ENCODE measurements at regions of chr20 and their contacts with region 1.

Region 1: DNA sequence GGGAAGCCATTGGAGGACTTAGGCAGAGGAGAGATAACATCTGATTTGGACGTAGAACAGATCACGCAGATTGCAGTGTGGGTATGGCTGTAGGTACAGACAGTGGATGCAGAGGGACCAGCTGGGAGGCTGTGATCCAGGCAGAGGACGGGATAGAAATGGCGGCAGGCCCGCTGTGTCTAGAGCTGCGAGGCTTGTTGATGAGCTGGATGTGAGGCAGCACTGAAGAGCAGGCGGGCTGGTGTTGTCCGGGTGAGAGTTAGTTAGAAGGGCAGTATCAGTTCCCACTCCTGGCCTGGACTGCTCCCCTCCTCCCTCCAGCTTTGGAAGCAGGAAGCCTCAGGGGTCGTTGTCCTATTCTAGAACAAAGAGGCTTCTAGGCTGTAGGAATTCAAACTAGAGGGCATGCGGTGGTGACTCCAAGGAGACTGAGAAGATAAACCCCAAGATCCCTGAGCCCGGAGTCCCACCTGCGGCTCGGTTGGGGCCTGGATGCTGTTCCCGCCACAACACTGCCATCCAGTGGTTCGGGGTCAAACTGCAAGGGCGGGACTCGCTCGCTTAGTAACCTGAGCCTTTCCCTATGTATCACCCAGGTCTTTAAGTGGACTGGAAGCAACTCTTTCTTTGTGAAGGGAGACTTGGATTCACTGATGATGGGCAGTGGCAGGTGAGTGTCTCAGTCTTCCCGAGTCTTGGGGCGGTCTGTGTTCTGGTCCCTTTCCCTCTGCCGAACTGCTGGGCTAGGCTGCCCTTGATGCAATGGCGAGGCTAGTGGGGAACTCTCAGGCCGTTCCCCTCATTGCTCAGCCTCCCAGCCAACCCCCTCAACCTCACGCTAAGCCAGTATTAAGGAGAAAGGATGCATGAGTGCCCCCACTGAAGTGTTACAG is 11.2 kb downstream of the TLDC2 start:
- DNase-seq: peak; percentile 94
- ATAC-seq: peak; percentile 96
- H3K4me3 ChIP-seq: peak overlapping the region; percentile 29; the same call in 1 of the 2 replicates
- H3K27ac ChIP-seq: no peak overlapping the region
- H3K4me1 ChIP-seq: peaks cover 4% of the 10 kb centered on the region; the same call in 1 of the 2 replicates
- H3K27me3 ChIP-seq: no peaks in the 10 kb centered on the region
- CTCF ChIP-seq: peak; percentile 94

Region 2: DNA sequence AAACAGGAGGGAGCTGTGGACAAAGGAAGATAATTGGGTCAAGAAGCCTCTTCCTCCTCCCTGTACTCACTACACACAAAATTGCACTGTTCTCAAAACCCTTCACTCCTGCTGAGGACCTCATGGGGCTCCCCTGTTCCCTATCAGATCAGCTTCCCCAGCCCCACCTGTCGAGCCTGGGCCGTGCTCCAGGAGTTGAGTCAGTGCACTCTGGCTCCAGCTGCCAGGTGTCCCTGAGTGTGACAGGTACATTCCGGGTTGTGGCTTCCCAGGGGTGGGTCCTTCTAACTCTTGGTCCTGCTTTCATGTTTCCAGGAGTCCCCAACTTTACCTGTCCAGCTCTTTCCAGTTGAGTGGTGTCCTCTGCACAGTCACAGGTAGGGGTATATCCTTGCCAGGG is 273.1 kb before region 1 on chr20:
- CTCF ChIA-PET with region 1: interaction called, 11 read pairs
- POLR2A ChIA-PET with region 1: no interaction called
- intact Hi-C with region 1: no loop called
- DNase-seq: peak; percentile 71
- ATAC-seq: peak; percentile 77
- H3K4me3 ChIP-seq: no peak overlapping the region
- H3K27ac ChIP-seq: no peak overlapping the region
- H3K4me1 ChIP-seq: peaks cover 12% of the 10 kb centered on the region; the same call in 1 of the 2 replicates
- H3K27me3 ChIP-seq: no peaks in the 10 kb centered on the region
- CTCF ChIP-seq: no peak

Region 3: DNA sequence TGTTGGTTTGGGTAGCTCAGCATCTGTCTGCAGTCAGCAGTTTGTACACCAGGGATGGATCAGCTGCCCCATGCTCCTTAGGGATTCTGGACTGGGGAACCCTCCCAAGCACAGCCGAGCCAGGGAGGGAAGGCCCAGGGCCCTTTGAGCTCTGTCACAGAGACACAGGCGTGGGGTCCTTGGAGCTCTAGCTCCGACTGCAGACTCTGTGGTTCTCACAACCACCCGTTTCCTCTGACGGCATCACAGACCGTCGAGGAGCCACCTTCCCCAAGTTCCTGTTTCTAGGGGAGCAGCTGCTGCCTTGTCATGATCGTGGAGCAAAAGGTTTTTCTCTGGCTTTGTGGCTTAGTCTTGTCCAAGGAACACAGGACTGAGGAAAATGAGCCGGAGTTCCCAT is 241.1 kb before region 1 on chr20 and contains the start of gene SLA2:
- CTCF ChIA-PET with region 1: interaction called, 10 read pairs
- POLR2A ChIA-PET with region 1: no interaction called
- intact Hi-C with region 1: no loop called
- DNase-seq: no peak
- ATAC-seq: no peak
- H3K4me3 ChIP-seq: no peak within 1 kb of the TSS
- H3K27ac ChIP-seq: no peak within 1 kb of the TSS
- H3K4me1 ChIP-seq: peaks cover 12% of the 10 kb centered on the region
- H3K27me3 ChIP-seq: no peaks in the 10 kb centered on the region
- CTCF ChIP-seq: no peak
- total RNA-seq, gene SLA2: 0.23 and 0.51 TPM in 2 replicates

Region 4: GRCh38 chr20:36773597-36774390 is 113.3 kb before region 1 on chr20 and contains the start of gene DSN1:
- CTCF ChIA-PET with region 1: no interaction called
- POLR2A ChIA-PET with region 1: no interaction called
- intact Hi-C with region 1: loop called (anchors 1 kb)
- DNase-seq: peak; percentile 99
- ATAC-seq: peak; percentile 83
- H3K4me3 ChIP-seq: peak within 1 kb of the TSS; percentile 82
- H3K27ac ChIP-seq: peak within 1 kb of the TSS; percentile 83
- H3K4me1 ChIP-seq: peaks cover 18% of the 10 kb centered on the region
- H3K27me3 ChIP-seq: no peaks in the 10 kb centered on the region
- CTCF ChIP-seq: peak; percentile 89; the same call in 1 of the 2 replicates
- total RNA-seq, gene DSN1: 36.3 and 39.8 TPM in 2 replicates

Region 5: DNA sequence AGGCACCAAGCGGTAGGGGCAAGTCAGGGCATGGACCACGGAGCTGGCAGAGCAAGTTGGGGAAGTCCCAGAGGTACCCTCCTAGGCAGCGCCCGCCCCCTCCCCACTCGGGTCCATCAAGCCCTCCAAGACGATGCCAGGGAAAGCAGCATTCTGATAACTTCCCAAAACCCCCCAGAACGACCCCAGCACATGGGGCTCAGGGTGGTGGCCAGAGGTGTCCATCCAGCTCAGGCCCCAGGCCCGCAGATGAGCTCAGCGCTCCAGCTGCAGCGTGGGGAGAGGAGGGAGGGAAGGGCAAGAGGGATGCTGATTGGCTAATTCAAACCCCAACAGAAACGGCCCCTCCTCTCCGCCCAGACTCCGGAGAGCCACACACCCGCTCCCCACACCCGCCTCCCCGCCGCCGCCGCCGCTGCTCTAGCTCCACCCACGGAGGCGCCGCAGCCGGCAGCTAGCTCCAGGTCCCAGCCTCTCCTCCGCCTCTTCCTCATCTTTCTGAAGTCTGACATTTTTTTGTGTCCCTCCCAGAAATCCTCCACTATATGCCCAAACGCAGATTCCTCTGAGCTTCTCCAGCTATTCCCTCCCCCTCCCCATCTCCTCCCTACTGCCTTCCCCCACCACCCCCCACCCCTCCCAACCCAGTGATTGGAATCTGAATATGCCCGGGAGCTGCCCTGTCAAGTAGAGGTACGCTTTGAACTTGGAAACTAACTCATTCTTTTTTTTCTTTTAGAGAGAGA is 51.5 kb before region 1 on chr20:
- CTCF ChIA-PET with region 1: no interaction called
- POLR2A ChIA-PET with region 1: no interaction called
- intact Hi-C with region 1: loop called (anchors 5 kb)
- DNase-seq: peak; percentile 90
- ATAC-seq: peak; percentile 93
- H3K4me3 ChIP-seq: peak overlapping the region; percentile 33
- H3K27ac ChIP-seq: peak overlapping the region; percentile 20
- H3K4me1 ChIP-seq: peaks cover 24% of the 10 kb centered on the region
- H3K27me3 ChIP-seq: no peaks in the 10 kb centered on the region
- CTCF ChIP-seq: no peak

Region 6: DNA sequence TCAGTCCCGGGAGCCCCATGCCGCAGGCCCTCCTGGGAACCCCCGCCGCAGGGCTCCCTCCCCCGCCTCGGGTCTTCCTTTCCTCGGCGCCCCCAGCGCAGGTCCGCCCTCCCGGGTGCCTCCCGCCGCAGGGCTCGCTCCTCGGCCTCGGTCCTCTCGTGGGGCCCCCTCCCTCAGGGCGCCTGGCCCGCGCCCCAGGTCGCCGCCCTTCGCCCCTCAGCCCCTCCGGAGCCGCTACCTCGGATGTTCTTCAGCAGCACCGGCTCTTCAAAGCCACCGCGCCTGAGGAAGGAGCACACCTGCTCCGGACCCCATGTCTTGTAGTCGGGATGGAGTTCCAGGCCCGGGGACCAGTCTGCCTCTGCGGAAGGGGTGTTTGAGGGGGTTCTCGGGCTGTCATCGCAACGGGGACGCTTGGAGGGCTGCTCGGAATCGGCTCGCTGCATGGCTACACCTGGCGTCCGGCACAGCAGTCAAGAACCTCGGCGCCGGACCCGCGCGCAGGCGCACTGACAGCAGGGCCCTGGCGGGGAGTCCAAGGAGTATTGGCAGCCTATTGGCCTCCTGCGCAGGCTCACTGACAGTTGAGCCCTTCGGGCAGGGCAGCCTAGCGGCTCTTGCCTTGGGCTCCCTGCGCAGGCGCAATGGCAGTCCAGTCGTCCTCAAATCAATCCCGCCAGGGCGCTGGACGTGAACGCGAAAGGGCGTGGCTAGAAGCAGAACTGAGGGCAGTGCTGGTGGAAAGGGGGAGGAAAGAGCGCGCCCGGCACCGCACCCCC is 64.3 kb after region 1 on chr20 and contains the start of gene SAMHD1:
- CTCF ChIA-PET with region 1: no interaction called
- POLR2A ChIA-PET with region 1: no interaction called
- intact Hi-C with region 1: no loop called
- DNase-seq: peak; percentile 99
- ATAC-seq: peak; percentile 94
- H3K4me3 ChIP-seq: peak within 1 kb of the TSS; percentile 93
- H3K27ac ChIP-seq: no peak within 1 kb of the TSS
- H3K4me1 ChIP-seq: peaks cover 17% of the 10 kb centered on the region; the same call in 1 of the 2 replicates
- H3K27me3 ChIP-seq: no peaks in the 10 kb centered on the region
- CTCF ChIP-seq: no peak
- total RNA-seq, gene SAMHD1: 23.0 and 24.2 TPM in 2 replicates